Calu3 (cell line): ENCODE measurements at regions of chr1 and their contacts with region 1.

Region 1: GRCh38 chr1:244322791-244323521 is 128.8 kb downstream of the ADSS2 start:
- DNase-seq: peak; percentile 81
- H3K4me3 Mint-ChIP-seq: peak overlapping the region; percentile 48
- H3K27ac Mint-ChIP-seq: peak overlapping the region; percentile 94
- H3K4me1 Mint-ChIP-seq: peaks cover 65% of the 10 kb centered on the region
- H3K27me3 Mint-ChIP-seq: no peaks in the 10 kb centered on the region
- CTCF ChIP-seq: no peak

Region 2: DNA sequence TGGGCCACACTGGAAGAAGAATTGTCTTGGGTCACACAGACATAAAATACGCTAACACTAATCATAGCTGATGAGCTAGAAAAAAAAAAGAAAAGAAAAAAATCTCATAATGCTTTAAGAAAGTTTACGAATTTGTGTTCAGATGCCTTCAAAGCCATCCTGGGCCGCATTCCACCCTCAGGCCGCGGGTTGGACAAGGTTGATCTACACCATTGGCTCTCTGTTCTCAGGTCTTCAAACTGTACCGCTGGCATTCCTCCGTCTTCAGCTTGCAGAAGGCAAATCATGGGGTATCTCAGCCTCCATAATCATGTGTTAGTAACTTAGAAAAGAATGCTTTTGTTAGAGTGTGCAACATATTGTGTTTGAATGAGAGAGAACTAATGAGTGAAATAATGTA is 458.0 kb before region 1 on chr1:
- CTCF ChIA-PET with region 1: no interaction called
- intact Hi-C with region 1: no loop called
- DNase-seq: no peak
- H3K4me3 Mint-ChIP-seq: no peak overlapping the region
- H3K27ac Mint-ChIP-seq: no peak overlapping the region
- H3K4me1 Mint-ChIP-seq: no peaks in the 10 kb centered on the region
- H3K27me3 Mint-ChIP-seq: peaks cover 12% of the 10 kb centered on the region
- CTCF ChIP-seq: no peak

Region 3: GRCh38 chr1:244265507-244265906 is 57.4 kb before region 1 on chr1:
- CTCF ChIA-PET with region 1: no interaction called
- intact Hi-C with region 1: no loop called
- DNase-seq: no peak
- H3K4me3 Mint-ChIP-seq: no peak overlapping the region
- H3K27ac Mint-ChIP-seq: no peak overlapping the region
- H3K4me1 Mint-ChIP-seq: peaks cover 8% of the 10 kb centered on the region
- H3K27me3 Mint-ChIP-seq: no peaks in the 10 kb centered on the region
- CTCF ChIP-seq: no peak

Region 4: GRCh38 chr1:244302889-244303613 is 19.9 kb before region 1 on chr1:
- CTCF ChIA-PET with region 1: interaction called, 4 read pairs
- intact Hi-C with region 1: loop called (anchors 2 kb)
- DNase-seq: peak; percentile 79
- H3K4me3 Mint-ChIP-seq: peak overlapping the region; percentile 56
- H3K27ac Mint-ChIP-seq: peak overlapping the region; percentile 92
- H3K4me1 Mint-ChIP-seq: peaks cover 49% of the 10 kb centered on the region
- H3K27me3 Mint-ChIP-seq: no peaks in the 10 kb centered on the region
- CTCF ChIP-seq: no peak

Region 5: DNA sequence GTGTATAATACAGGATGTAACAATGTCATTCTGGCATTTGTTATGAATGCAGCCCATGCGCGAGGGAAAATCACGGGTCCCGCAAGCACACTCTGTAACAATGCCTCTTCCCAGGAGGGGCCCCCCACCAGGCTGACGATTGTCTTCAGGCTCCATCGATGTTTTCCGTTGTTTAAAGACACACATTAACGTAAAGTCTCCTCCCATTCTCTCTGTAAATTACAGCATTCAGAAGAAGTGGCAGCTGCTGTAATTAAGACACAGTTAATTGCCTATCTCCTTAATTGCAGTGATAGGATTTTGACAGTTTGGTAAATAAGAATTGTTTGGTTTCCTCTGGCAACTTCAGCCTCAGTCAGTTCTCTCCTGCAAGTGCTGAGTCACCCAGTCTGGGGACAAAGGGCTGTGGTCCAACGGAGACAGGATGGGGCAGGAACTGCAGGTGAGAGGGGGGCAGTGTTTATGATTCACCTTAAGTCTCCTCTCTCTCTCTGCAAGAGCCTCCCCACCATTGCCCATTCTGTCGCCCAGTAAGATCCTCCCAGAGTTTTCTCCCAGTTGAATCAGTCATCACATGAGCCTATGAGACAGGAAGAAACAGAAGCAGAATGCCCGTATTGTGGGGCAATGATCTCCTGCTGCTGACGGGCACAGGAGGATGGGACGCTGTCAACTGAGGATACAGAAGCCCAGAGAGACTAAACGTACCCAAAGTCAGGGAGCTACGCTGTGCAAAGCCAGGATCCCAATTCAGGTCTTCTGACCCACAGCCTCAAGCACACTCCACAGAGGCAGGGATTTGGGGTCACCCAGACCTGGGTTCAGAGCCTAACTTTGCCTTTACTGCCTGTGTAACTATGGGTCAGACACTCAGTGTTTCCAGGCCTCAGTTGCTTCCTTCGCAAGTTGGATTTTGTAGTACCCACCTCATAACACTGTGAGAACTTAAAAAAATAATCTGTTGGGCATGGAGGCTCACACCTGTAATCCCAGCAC is 18.8 kb after region 1 on chr1:
- CTCF ChIA-PET with region 1: interaction called, 3 read pairs
- intact Hi-C with region 1: loop called (anchors 2 kb)
- DNase-seq: peak; percentile 80
- H3K4me3 Mint-ChIP-seq: peak overlapping the region; percentile 48
- H3K27ac Mint-ChIP-seq: peak overlapping the region; percentile 90
- H3K4me1 Mint-ChIP-seq: peaks cover 25% of the 10 kb centered on the region
- H3K27me3 Mint-ChIP-seq: no peaks in the 10 kb centered on the region
- CTCF ChIP-seq: no peak

Region 6: GRCh38 chr1:244406337-244406736 is 83.4 kb after region 1 on chr1:
- CTCF ChIA-PET with region 1: no interaction called
- intact Hi-C with region 1: no loop called
- DNase-seq: no peak
- H3K4me3 Mint-ChIP-seq: no peak overlapping the region
- H3K27ac Mint-ChIP-seq: no peak overlapping the region
- H3K4me1 Mint-ChIP-seq: peaks cover 13% of the 10 kb centered on the region
- H3K27me3 Mint-ChIP-seq: no peaks in the 10 kb centered on the region
- CTCF ChIP-seq: no peak

Region 7: DNA sequence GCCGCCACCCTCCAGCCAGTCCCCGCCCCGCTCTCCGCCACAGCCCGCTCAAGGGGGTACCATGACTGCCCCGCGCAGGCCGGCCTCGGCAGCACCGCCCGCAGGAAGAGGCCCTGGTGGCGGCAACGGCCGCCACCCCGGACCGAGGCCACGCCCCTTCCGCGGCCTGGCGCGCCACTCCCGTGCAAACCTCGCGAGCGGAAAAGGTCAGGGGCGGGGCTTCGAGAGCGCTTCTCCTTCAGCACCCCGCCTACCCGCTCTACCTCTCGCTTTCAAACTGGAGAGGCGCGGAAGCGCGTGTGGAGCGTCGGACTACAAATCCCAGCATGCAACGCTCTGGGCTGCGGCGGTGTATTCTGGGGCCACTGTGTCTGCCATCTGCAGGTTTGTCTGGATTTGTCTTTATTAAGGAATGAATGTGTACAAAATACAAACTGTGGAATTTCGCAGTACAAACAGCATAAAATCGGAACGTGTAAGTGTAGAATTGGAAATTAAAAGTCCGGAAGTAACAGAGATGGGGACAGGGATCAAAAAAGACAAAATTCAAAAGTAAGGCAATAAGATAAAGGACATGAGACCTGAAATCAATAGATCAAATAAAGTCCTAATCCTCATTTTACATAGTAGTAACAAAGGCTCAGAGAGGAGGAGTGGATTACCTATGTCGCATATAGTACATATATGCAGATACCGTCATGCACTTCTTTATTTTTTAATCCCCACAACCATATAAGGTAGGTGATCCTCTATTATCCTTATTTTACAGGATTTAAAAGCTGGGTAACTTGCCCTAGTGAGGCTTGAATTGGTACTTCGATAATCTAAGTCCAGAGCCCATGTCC is 129.2 kb after region 1 on chr1:
- CTCF ChIA-PET with region 1: no interaction called
- intact Hi-C with region 1: loop called (anchors 5 kb)
- DNase-seq: peak; percentile 100
- H3K4me3 Mint-ChIP-seq: peak overlapping the region; percentile 59
- H3K27ac Mint-ChIP-seq: peak overlapping the region; percentile 60
- H3K4me1 Mint-ChIP-seq: peaks cover 45% of the 10 kb centered on the region
- H3K27me3 Mint-ChIP-seq: no peaks in the 10 kb centered on the region
- CTCF ChIP-seq: no peak